ENCODE measurements at regions of chr20 and their contacts with region 1.

Region 1: GRCh38 chr20:9392892-9393857 is 121.2 kb upstream of the LAMP5 start:
- DNase-seq: no peak
- H3K4me3 ChIP-seq: no peak overlapping the region
- CTCF ChIP-seq: peak; percentile 91

Region 2: DNA sequence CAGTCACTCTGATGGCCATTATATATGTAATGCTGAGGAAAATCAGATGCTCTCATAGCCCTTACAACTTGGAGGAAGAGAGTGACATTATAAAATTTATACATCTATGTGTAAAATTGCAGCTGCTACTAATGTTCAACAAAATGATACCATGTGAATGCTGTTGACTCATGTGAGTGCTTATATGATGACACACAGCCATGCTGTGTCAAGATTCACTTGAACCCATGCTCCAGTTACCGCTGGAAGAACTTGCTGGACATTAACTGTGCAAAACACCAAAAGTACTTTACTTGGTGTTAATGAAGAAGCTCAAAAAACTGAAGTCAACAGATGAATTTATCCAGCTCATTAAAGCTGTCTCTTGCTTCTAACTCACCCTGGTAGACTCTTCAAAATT is 643.2 kb before region 1 on chr20:
- CTCF ChIA-PET with region 1: interaction called, 44 read pairs
- POLR2A ChIA-PET with region 1: no interaction called
- DNase-seq: no peak
- H3K4me3 ChIP-seq: no peak overlapping the region
- CTCF ChIP-seq: no peak

Region 3: DNA sequence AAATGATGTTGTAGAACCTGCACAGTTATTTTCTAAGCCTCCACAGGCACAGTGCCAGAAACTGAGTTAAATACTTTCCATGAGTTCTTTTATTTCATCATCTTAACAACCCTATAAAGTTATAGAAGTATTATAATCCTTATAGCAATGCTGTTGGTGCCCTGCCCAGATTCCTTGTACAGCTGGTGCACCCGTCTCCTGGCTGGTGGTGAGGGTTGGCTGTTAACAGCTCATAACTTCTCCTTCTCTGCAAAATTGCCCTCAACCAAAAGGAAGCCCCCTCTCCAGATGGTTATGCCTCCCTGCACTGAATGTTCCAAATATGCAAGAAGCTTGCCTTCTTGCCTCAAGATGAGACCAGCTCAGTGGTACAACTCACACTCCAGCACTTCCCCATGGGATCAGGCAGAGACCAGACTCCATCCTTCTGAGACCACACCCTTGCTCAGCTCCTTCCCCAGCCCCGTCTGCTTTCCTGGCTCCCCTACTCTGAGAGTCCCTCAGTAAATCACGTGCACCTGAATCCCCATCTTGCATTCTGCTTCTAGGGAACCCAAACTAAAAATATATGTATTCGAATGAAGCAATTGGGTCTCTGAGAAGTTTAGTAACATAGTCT is 628.7 kb before region 1 on chr20:
- CTCF ChIA-PET with region 1: interaction called, 62 read pairs
- POLR2A ChIA-PET with region 1: no interaction called
- DNase-seq: no peak
- H3K4me3 ChIP-seq: no peak overlapping the region
- CTCF ChIP-seq: no peak

Region 4: GRCh38 chr20:8790442-8791074 is 602.6 kb before region 1 on chr20:
- CTCF ChIA-PET with region 1: interaction called, 19 read pairs
- POLR2A ChIA-PET with region 1: no interaction called
- DNase-seq: no peak
- H3K4me3 ChIP-seq: no peak overlapping the region
- CTCF ChIP-seq: peak; percentile 74

Region 5: DNA sequence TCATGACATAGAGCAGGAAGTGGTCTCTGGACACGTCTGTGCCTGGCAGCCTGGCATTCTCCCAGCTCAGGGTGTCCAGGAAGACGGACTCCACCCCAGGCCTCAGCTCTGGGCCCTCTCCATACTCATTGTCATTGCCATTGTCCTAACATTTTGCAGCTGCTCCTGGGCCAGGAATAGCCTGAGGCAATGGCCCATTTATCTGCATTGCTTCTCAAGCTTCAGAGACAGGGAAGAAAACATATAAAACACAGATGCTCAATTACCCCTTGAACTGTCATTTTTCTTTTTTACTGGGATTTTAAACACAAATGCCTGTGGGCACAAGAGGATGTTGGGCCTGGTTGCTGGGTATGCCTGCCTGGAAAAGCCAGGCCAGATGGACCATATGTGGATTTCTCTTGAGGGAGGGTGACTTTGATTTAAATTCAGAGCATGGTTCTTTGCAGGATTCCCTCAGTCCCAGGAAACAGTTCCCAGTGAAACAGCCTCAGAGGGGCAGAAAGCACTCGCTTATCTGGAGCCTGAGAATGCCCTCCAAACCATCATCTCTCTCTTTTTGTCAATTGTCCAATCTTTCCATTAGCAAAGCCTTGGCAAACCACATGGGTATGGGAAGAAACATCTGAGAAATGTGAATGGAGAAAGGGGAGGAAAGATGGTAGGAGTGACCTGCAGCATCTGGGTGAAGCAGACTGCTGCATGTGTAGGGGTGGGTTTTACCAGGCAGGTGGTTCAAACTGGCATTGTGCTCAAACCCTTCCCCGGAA is 139.1 kb after region 1 on chr20:
- CTCF ChIA-PET with region 1: no interaction called
- POLR2A ChIA-PET with region 1: no interaction called
- DNase-seq: no peak
- H3K4me3 ChIP-seq: no peak overlapping the region
- CTCF ChIP-seq: no peak